GM12878 (cell line): ENCODE measurements at regions of chr14 and their contacts with region 1.

Region 1: GRCh38 chr14:74905375-74906142 is 17.5 kb downstream of the RPS6KL1 start:
- DNase-seq: no peak
- ATAC-seq: peak; percentile 87
- H3K4me3 ChIP-seq: no peak overlapping the region
- H3K27ac ChIP-seq: no peak overlapping the region
- H3K4me1 ChIP-seq: peaks cover 4% of the 10 kb centered on the region; the same call in 1 of the 2 replicates
- H3K27me3 ChIP-seq: no peaks in the 10 kb centered on the region
- CTCF ChIP-seq: peak; percentile 88 to 96 (median 94)
- EP300 ChIP-seq: no peak
- POLR2A ChIP-seq: peak; percentile 66; the same call in 1 of the 2 replicates
- RAD21 ChIP-seq: peak; percentile 82

Region 2: DNA sequence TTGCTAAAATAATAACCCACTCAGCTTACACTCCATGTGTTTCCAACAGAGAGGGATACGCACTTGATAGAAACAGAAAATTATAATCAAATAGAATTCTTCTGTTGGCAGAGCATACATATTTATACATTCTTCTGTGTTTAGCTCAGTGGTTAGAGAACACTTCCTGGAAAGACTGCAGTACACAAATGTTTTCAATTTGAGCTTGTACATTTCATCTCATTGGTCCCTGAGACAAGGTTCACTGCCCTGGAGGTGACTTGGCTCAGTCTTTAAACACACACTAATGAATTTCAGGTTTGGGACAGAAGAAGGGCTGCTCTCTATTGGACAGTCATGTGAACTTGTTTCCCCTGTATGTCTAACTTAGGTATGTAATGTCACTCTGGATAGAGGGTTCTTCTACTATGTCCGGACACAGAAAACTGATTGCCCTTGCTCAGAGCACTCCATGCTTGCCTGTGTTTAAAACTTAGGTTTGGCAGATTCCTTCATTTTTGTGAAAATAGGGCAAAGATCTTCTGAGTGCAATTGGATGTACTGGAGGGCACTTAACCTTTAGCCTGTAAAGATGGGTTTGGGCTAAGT is 52.5 kb before region 1 on chr14:
- CTCF ChIA-PET with region 1: interaction called, 552 read pairs
- POLR2A ChIA-PET with region 1: interaction called, 3 read pairs
- RAD21 ChIA-PET with region 1: interaction called, 114 read pairs
- SMC1A ChIA-PET with region 1: interaction called, 165 read pairs
- in situ Hi-C with region 1: no loop called
- intact Hi-C with region 1: no loop called
- DNase-seq: no peak
- ATAC-seq: peak; percentile 32
- H3K4me3 ChIP-seq: no peak overlapping the region
- H3K27ac ChIP-seq: no peak overlapping the region
- H3K4me1 ChIP-seq: no peaks in the 10 kb centered on the region
- H3K27me3 ChIP-seq: no peaks in the 10 kb centered on the region
- CTCF ChIP-seq: no peak
- EP300 ChIP-seq: no peak
- POLR2A ChIP-seq: no peak
- RAD21 ChIP-seq: no peak

Region 3: DNA sequence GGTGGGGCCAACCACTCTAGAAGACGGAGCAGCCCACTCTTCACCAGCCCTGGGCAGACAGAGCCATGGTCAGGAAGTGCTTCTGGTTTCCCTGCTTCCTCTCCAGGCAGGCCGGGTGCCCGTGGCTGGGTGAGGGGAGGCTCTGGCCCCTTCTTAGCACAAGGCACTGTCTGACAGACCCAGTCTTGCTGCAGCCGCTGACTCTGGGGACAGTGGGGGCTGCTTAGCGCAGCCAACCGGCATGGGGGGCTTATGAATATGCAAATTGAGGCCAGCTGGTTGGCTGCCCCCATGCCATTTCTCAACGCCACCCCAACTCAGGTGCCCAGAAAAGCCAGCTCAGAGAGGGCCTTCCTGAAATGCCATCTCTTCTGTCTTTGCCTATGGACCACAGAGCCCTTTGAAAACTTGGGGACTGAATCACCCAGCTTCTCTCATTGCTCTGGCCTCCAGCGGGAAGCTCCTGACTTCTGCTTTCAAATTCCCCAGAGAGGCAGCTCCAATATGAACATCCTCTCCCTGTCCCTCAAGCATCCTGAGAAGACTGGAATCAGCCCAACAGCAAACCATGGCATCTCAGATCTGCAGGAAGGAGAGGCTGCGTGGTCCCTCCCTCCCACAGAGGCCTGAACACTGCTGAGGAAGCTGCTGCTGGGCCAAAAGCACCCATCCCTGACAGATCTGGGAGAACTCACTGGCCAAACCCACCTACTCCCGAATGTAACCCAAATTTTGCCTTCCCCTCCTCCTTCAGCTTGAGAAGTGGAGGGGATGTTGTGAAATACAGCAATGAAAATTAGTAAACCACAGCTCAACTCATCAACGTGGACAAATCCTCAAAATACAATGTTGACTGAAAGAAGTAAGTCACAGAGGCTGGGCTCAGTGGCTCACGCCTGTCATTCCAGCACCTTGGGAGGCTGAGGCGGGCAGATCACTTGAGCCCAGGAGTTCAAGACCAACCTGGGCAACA is 29.3 kb before region 1 on chr14 and contains the start of gene PROX2:
- CTCF ChIA-PET with region 1: interaction called, 73 read pairs
- POLR2A ChIA-PET with region 1: interaction called, 3 read pairs
- RAD21 ChIA-PET with region 1: interaction called, 11 read pairs
- SMC1A ChIA-PET with region 1: interaction called, 15 read pairs
- in situ Hi-C with region 1: no loop called
- intact Hi-C with region 1: no loop called
- DNase-seq: no peak
- ATAC-seq: peak; percentile 47
- H3K4me3 ChIP-seq: no peak within 1 kb of the TSS
- H3K27ac ChIP-seq: no peak within 1 kb of the TSS
- H3K4me1 ChIP-seq: peaks cover 13% of the 10 kb centered on the region
- H3K27me3 ChIP-seq: no peaks in the 10 kb centered on the region; a peak in 1 of 4 replicates
- CTCF ChIP-seq: no peak
- EP300 ChIP-seq: no peak
- POLR2A ChIP-seq: no peak
- RAD21 ChIP-seq: no peak
- polyA plus RNA-seq, gene PROX2: 0.04 to 0.05 TPM

Region 4: GRCh38 chr14:74893614-74894091 is 11.9 kb before region 1 on chr14:
- CTCF ChIA-PET with region 1: interaction called, 67 read pairs
- POLR2A ChIA-PET with region 1: interaction called, 3 read pairs
- RAD21 ChIA-PET with region 1: interaction called, 3 read pairs
- SMC1A ChIA-PET with region 1: interaction called, 8 read pairs
- in situ Hi-C with region 1: no loop called
- intact Hi-C with region 1: no loop called
- DNase-seq: peak; percentile 37
- ATAC-seq: peak; percentile 69
- H3K4me3 ChIP-seq: no peak overlapping the region; the same call in 1 of the 2 replicates
- H3K27ac ChIP-seq: peak overlapping the region; percentile 63
- H3K4me1 ChIP-seq: peaks cover 35% of the 10 kb centered on the region
- H3K27me3 ChIP-seq: no peaks in the 10 kb centered on the region
- CTCF ChIP-seq: no peak
- EP300 ChIP-seq: no peak
- POLR2A ChIP-seq: no peak
- RAD21 ChIP-seq: no peak

Region 5: GRCh38 chr14:74945823-74946682 is 40.5 kb after region 1 on chr14:
- CTCF ChIA-PET with region 1: interaction called, 10 read pairs
- POLR2A ChIA-PET with region 1: no interaction called
- RAD21 ChIA-PET with region 1: no interaction called
- SMC1A ChIA-PET with region 1: interaction called, 3 read pairs
- in situ Hi-C with region 1: no loop called
- intact Hi-C with region 1: no loop called
- DNase-seq: no peak
- ATAC-seq: peak; percentile 84
- H3K4me3 ChIP-seq: no peak overlapping the region
- H3K27ac ChIP-seq: no peak overlapping the region
- H3K4me1 ChIP-seq: peaks cover 23% of the 10 kb centered on the region
- H3K27me3 ChIP-seq: no peaks in the 10 kb centered on the region
- CTCF ChIP-seq: peak; percentile 90 to 96 (median 94)
- EP300 ChIP-seq: no peak
- POLR2A ChIP-seq: no peak
- RAD21 ChIP-seq: peak; percentile 87